Left lung (tissue), 14 donors: ENCODE measurements at regions of chr2 and their contacts with region 1.

Region 1: DNA sequence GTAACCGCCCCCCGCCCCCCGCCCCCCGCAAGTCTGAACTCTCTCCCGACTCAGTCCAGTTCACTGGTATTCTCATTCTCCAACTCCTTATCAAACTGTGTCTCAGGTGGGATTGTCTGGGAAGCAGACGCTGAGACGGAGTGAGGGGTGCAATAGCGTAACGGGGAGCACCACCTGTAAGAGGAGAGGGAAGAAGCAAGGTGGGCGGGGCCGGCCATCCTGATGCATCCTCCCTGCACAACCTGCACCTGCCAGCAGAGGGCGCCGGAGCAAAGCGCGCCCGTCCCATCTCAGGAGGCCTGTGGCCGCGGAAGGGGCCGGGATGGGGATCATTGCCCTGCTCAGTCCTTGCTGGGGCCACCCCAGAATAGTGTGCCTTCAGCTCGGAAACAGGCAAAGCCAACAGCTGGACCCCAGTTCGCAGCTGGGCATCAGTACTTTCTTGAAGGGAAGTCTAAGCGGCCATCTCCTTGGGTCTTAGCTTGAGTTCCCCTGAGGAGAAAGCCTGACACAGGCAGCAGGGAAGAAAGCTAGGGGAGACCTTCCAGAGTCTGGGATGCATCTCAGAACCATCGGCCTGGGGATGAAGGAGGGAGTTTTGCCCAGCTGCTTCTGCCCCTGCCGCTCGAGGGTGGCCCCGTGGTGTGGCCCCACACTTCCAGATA is 208.0 kb downstream of the TFCP2L1 start:
- DNase-seq: peak in 3 of 4 donors; percentile 39 to 95 (median 68)
- ATAC-seq: peak; percentile 85
- H3K4me3 ChIP-seq: no peak overlapping the region
- H3K27ac ChIP-seq: no peak overlapping the region
- H3K4me1 ChIP-seq: no peaks in the 10 kb centered on the region
- H3K27me3 ChIP-seq: peaks cover 8 to 67% of the 10 kb centered on the region in 2 donors
- CTCF ChIP-seq: peak; percentile 72 to 91

Region 2: GRCh38 chr2:121272581-121273515 is 195.8 kb after region 1 on chr2:
- intact Hi-C with region 1: no loop called
- DNase-seq: no peak
- ATAC-seq: no peak
- H3K4me3 ChIP-seq: no peak overlapping the region
- H3K27ac ChIP-seq: no peak overlapping the region
- H3K4me1 ChIP-seq: no peaks in the 10 kb centered on the region
- H3K27me3 ChIP-seq: no peaks in the 10 kb centered on the region
- CTCF ChIP-seq: no peak

Region 3: GRCh38 chr2:121356058-121356640 is 279.1 kb after region 1 on chr2:
- intact Hi-C with region 1: loop called in 1 of 2 experiments (anchors 10 kb)
- DNase-seq: peak in 2 of 4 donors; percentile 49 to 74
- ATAC-seq: peak; percentile 86
- H3K4me3 ChIP-seq: no peak overlapping the region
- H3K27ac ChIP-seq: no peak overlapping the region
- H3K4me1 ChIP-seq: no peaks in the 10 kb centered on the region
- H3K27me3 ChIP-seq: no peaks in the 10 kb centered on the region
- CTCF ChIP-seq: peak; percentile 56 to 63